ENCODE measurements at regions of chr22 and their contacts with region 1.

Region 1: DNA sequence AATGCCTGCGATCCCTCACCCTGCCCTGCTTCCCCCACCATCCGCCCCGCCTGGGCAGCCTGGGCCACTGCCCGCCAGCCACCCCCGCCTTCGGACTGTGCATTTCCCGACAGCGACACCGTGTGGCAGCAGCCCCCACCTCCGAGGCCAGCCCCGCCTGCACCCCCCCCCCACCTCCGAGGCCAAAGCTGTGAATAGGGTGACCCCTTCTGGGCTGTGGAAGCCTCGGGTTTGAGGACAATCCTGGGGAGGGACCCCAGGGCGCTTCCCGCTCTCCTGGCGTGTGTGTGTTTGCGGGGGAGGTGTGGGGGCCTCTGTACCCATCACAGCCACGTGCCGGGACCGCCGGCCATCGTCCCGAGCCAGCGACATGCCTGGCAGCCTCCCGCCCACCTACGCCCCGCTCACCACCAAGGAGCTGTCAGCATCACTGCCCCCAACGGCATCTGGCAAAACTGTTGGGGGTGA is 33.8 kb upstream of the PPARA start:
- DNase-seq: peak; percentile 87
- ATAC-seq: peak; percentile 92
- H3K4me3 Mint-ChIP-seq: no peak overlapping the region
- H3K27ac Mint-ChIP-seq: no peak overlapping the region
- H3K4me1 Mint-ChIP-seq: peaks cover 9% of the 10 kb centered on the region
- H3K27me3 Mint-ChIP-seq: no peaks in the 10 kb centered on the region

Region 2: GRCh38 chr22:45918459-45919370 is 197.8 kb before region 1 on chr22:
- CTCF ChIA-PET with region 1: no interaction called
- POLR2A ChIA-PET with region 1: no interaction called
- DNase-seq: no peak
- ATAC-seq: no peak
- H3K4me3 Mint-ChIP-seq: no peak overlapping the region
- H3K27ac Mint-ChIP-seq: no peak overlapping the region
- H3K4me1 Mint-ChIP-seq: no peaks in the 10 kb centered on the region
- H3K27me3 Mint-ChIP-seq: no peaks in the 10 kb centered on the region

Region 3: DNA sequence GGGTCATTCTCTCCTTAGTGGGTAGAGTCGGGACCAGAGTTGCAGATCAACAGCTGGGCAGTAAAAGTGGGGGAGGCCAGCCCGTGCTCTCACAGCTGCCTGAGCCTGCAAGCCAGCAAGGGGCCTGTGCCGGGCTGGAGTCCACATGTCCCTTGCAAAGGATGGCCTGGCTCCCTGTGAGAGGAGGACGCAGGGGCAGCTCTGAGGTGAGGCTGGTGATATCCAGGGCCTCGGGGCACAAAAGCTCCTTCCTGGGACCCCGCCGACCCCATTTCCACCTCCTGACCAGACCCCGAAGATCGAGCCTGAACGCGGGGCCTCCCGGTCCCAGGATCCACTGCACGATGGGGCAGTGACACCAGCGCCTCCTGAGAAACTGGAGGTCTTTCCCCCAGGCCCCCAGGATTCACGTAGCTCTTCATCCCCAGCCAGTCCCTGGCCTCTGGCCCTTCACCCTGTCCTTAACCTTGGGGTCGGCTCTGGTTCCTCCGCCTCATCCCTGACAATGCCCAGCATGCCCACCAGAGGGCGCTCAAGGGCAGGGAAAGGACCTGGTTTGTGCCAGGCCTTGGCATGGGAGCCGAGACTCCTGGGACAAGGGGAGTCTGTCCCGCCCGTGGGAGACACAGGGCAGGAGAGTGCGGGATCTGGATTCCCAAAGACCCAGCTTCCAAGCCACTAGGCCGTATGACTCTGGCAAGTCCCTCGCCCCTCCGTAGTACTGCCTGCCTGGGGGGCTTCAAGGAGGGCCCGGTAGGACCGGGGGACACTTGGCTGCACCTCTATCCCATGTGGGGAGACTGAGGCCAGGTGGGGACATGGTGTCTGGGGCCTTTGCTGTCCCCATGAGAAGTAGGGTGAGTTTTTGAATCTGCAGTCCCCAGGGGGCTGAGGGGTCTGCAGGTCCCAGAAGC is 121.8 kb before region 1 on chr22:
- CTCF ChIA-PET with region 1: interaction called, 39 read pairs
- POLR2A ChIA-PET with region 1: no interaction called
- DNase-seq: peak; percentile 83
- ATAC-seq: peak; percentile 66
- H3K4me3 Mint-ChIP-seq: no peak overlapping the region
- H3K27ac Mint-ChIP-seq: no peak overlapping the region
- H3K4me1 Mint-ChIP-seq: peaks cover 21% of the 10 kb centered on the region
- H3K27me3 Mint-ChIP-seq: peaks cover 6% of the 10 kb centered on the region

Region 4: GRCh38 chr22:46013460-46014416 is 102.8 kb before region 1 on chr22:
- CTCF ChIA-PET with region 1: interaction called, 23 read pairs
- POLR2A ChIA-PET with region 1: no interaction called
- DNase-seq: peak; percentile 80
- ATAC-seq: peak; percentile 96
- H3K4me3 Mint-ChIP-seq: peak overlapping the region; percentile 81
- H3K27ac Mint-ChIP-seq: peak overlapping the region; percentile 79
- H3K4me1 Mint-ChIP-seq: peaks cover 12% of the 10 kb centered on the region
- H3K27me3 Mint-ChIP-seq: peaks cover 3% of the 10 kb centered on the region

Region 5: GRCh38 chr22:46019351-46019750 is 97.2 kb before region 1 on chr22:
- CTCF ChIA-PET with region 1: interaction called, 23 read pairs
- POLR2A ChIA-PET with region 1: no interaction called
- DNase-seq: no peak
- ATAC-seq: no peak
- H3K4me3 Mint-ChIP-seq: no peak overlapping the region
- H3K27ac Mint-ChIP-seq: no peak overlapping the region
- H3K4me1 Mint-ChIP-seq: peaks cover 3% of the 10 kb centered on the region
- H3K27me3 Mint-ChIP-seq: peaks cover 11% of the 10 kb centered on the region

Measured in activated CD8-positive, alpha-beta T cell treated with anti-CD3 and anti-CD28 coated beads, Interleukin-2, amount 10 ng/mL, durations not matched to agents 7 days and 5 days (primary cell).